GM13976 (cell line): ENCODE measurements at regions of chr6 and their contacts with region 1.

Region 1: GRCh38 chr6:114747987-114748630 is 405.3 kb upstream of the HS3ST5 start:
- DNase-seq: peak; percentile 3
- CTCF ChIP-seq: peak; percentile 36

Region 2: GRCh38 chr6:114514153-114514552 is 234.0 kb before region 1 on chr6:
- in situ Hi-C with region 1: no loop called
- DNase-seq: no peak
- CTCF ChIP-seq: no peak

Region 3: GRCh38 chr6:114906096-114906495 is 158.0 kb after region 1 on chr6:
- in situ Hi-C with region 1: no loop called
- DNase-seq: no peak
- CTCF ChIP-seq: no peak

Region 4: GRCh38 chr6:115896538-115897129 is 1148.5 kb after region 1 on chr6:
- in situ Hi-C with region 1: loop called (anchors 25 kb)
- DNase-seq: peak; percentile 21
- CTCF ChIP-seq: peak; percentile 58